ENCODE measurements at regions of chr2 and their contacts with region 1.

Region 1: DNA sequence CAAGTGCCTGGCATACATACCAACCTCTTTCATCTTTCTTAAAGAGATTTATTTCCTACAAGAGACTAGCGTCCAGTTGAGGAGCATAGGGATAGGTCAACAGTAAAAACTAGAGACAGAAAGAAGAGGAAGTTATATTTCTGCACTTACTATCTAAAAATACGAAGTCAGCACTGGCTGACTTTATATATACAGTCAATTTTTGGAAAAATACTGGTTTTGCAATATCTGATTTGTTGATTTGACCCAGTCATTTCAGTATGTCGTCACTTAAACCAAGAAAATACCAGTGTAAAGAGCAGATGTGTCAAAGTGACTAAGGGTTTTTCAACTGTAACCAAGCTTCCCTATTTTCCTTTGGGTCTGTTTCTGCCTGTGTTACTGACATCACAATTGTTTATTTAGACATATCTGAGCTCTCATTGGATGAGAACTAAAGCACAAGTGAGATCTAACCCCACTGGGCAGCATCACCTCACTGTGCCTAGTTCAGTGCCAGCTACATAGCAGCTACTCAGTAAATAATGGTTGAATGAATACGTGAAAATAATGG is 23.0 kb downstream of the CYTIP start:
- DNase-seq: no peak
- H3K4me3 Mint-ChIP-seq: peak overlapping the region; percentile 69
- H3K27ac Mint-ChIP-seq: peak overlapping the region; percentile 91
- H3K4me1 Mint-ChIP-seq: peaks cover 84% of the 10 kb centered on the region
- H3K27me3 Mint-ChIP-seq: no peaks in the 10 kb centered on the region

Region 2: DNA sequence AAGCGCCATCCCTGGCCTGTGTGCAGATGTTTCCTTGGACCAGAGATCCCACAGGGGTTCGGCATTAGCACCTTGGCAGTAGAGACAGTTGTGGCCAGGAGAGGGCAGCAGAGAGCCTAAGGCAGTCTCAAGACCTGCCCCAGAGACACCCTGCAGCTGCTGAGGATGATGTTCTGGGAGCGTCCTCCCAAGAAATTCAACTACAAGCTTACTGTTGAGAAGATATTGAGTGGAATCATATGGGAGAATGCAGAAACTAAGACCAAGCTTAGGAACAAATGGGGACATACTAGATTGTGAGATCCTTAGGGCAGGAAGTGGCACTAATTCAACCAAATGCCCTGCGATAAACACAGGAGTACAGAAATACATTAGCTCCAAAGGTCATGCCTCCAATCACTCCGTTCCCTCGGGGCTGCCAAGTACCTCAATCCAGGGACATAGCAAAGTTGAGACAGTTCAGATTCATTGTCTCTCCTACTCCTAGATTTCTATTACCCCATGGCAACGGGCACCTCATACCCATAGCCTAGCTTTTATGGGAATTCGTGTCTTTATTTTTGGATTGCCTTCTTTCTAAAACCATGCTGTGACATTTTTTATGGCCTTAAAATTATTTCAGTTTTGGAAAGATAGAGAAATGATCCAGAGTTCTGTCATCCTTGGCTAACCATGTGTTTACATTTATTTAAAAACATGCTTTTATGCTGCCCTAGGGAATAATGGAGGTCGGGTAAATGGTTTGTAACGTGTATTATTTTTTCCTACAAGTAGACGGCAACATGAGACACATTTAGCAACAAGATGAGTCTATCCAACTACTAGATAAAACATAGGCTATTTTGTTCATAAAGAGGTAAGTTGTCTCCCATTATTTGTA is 93.0 kb before region 1 on chr2:
- intact Hi-C with region 1: loop called (anchors 2 kb)
- DNase-seq: peak; percentile 74
- H3K4me3 Mint-ChIP-seq: peak overlapping the region; percentile 32
- H3K27ac Mint-ChIP-seq: peak overlapping the region; percentile 26
- H3K4me1 Mint-ChIP-seq: peaks cover 38% of the 10 kb centered on the region
- H3K27me3 Mint-ChIP-seq: no peaks in the 10 kb centered on the region

Region 3: DNA sequence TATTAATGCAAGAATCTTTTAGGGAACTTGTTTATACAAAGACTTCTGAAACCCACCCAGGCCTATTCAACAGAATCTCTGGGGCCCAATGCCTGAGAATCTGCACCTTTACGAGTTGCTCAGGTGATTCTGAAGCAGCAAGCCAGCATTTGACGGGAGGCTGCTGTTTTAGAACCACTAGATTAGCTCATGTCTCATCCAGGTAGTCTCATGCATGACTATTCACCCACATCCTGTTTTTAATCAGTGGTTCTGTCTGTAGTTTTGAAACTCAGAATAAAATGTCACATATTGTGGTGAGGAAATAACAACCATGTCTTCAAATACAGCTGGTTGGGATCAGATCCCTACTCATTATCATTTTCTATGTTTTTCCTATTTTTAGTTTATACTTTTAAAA is 16.5 kb before region 1 on chr2:
- intact Hi-C with region 1: loop called (anchors 2 kb)
- DNase-seq: peak; percentile 62
- H3K4me3 Mint-ChIP-seq: peak overlapping the region; percentile 37
- H3K27ac Mint-ChIP-seq: peak overlapping the region; percentile 86
- H3K4me1 Mint-ChIP-seq: peaks cover 72% of the 10 kb centered on the region
- H3K27me3 Mint-ChIP-seq: no peaks in the 10 kb centered on the region

Region 4: DNA sequence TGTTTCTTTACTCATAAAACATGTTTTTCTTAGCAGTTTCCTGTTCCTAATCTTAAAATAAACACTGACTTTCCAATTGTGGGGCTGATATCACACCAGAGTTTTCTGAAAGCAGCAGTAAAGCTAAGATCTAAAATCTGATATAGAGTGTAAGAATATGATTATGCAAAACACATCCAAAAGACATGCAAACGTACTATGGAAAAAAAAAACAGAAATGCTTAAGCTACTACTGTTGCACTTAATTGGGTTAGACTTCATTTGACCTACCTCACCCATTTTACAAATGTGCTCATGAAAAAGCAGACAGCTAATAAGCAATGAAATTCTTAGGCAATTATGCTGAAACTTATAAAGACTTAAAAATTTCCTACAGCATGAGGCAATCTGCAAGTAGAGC is 12.5 kb after region 1 on chr2:
- intact Hi-C with region 1: loop called (anchors 1 kb)
- DNase-seq: no peak
- H3K4me3 Mint-ChIP-seq: peak overlapping the region; percentile 84
- H3K27ac Mint-ChIP-seq: peak overlapping the region; percentile 96
- H3K4me1 Mint-ChIP-seq: peaks cover 95% of the 10 kb centered on the region
- H3K27me3 Mint-ChIP-seq: no peaks in the 10 kb centered on the region

Region 5: DNA sequence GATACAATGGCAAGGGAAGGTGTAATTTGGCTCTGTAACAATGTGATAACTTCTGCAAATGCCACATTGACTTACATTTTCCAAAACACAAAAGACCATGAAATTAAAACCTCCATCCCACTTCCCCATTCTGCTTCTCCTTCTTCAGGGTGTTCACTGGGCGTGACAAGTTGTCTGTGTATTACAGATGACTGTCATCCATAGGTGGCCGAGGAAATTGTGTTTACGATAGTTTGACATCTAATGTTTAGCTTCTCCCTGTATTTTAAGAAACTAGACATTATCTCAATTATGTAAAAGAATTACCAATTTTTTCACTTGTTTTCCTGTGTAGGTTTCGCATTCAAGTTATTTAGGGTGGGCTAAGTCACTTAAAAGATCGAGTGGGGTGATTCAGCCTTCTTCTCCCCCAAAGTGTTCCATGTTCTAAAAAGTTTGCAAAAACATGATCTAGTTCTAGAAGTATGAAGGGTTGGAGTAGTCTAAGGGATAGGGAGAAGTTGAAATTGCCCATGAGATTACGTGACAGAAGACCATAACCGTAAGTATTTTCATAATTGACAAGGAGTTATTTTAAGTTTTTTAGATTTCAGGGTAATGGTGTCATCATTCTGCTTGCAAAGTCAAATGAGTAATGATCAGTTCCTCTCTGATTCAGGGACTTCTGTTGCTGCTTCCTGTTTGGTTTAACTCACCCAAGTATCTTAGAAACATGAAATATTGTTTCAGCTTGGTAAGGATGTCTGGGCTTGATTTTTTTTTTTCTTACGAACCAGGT is 48.3 kb after region 1 on chr2:
- intact Hi-C with region 1: loop called (anchors 1 kb)
- DNase-seq: no peak
- H3K4me3 Mint-ChIP-seq: peak overlapping the region; percentile 71
- H3K27ac Mint-ChIP-seq: peak overlapping the region; percentile 97
- H3K4me1 Mint-ChIP-seq: peaks cover 90% of the 10 kb centered on the region
- H3K27me3 Mint-ChIP-seq: no peaks in the 10 kb centered on the region

Measured in activated T-helper 1 cell treated with anti-CD3 and anti-CD28 coated beads, Interleukin-12 subunit alpha, Interleukin-12 subunit beta, Interleukin-2, Interleukin-4 antibody, amounts not matched to agents 30 ng/mL and 10 ng/mL and 1 ng/mL, durations not matched to agents 14 hours and 24 hours and 36 hours (primary cell).